ENCODE measurements at regions of chr10 and their contacts with region 1.

Region 1: GRCh38 chr10:98323221-98324164 is 55.5 kb upstream of the LOXL4 start:
- DNase-seq: peak; percentile 70 to 89 (median 86)
- ATAC-seq: peak; percentile 91 to 94 (median 93)
- H3K4me3 ChIP-seq: no peak overlapping the region
- H3K27ac ChIP-seq: peak overlapping the region in 7 of 12 donors; percentile 6 to 49 (median 35)
- H3K4me1 ChIP-seq: peaks cover 0 to 28% (median 11%) of the 10 kb centered on the region in 12 donors
- H3K27me3 ChIP-seq: peaks cover 0 to 6% (median 0%) of the 10 kb centered on the region in 9 donors
- CTCF ChIP-seq: no peak
- POLR2A ChIP-seq: no peak

Region 2: GRCh38 chr10:98361131-98362025 is 37.9 kb after region 1 on chr10:
- intact Hi-C with region 1: loop called in 1 of 10 experiments (anchors 1 kb)
- DNase-seq: peak; percentile 55 to 94 (median 83)
- ATAC-seq: peak; percentile 80 to 97 (median 94)
- H3K4me3 ChIP-seq: peak overlapping the region in 4 of 12 donors; percentile 4 to 24 (median 14)
- H3K27ac ChIP-seq: peak overlapping the region in 9 of 12 donors; percentile 8 to 80 (median 43)
- H3K4me1 ChIP-seq: peaks cover 0 to 11% (median 2%) of the 10 kb centered on the region in 12 donors
- H3K27me3 ChIP-seq: peaks cover 0 to 6% (median 0%) of the 10 kb centered on the region in 9 donors
- CTCF ChIP-seq: no peak
- POLR2A ChIP-seq: no peak

Measured in heart left ventricle (tissue), 16 donors.